Activated CD4-positive, alpha-beta T cell treated with anti-CD3 and anti-CD28 coated beads for 36 hours (primary cell): ENCODE measurements at regions of chr4 and their contacts with region 1.

Region 1: DNA sequence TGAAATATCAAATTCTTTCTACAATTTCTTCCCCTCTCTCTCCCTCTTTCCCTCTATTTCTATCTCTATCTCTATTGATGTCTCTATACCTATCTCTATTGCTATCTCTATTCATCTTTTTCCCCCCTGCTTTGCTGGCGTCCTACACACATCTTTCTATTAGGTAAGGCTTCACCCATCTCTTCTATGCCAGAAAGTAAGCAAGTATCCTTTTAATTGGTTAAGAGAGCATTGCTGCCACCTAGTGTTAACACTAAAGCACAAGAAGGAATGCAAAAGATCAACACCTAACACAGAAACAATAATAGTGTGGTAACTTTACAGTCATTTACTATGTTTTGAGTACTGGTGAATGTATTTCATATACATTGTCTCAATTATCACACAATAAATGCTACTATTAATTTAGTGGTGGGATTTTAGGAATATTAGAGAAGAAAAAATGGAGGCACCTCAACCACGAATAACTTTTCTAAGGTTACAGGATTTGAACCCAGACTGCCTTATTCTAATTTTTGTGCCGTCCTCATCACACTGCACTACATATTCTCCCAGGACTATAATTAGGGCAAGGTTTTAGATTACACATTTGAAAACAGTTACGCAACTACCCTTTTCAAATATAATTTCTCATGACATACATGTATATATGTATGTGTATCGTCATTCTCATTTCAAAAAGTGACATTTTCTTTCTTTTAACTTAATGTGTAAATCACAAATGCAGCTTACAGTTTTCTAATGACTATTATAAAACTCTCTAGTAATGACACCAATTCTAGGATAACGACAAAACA is 3.7 kb upstream of the C4orf36 start:
- DNase-seq: no peak
- ATAC-seq: peak; percentile 40
- H3K4me3 Mint-ChIP-seq: no peak overlapping the region
- H3K27ac Mint-ChIP-seq: no peak overlapping the region
- H3K4me1 Mint-ChIP-seq: peaks cover 7% of the 10 kb centered on the region
- H3K27me3 Mint-ChIP-seq: peaks cover 14% of the 10 kb centered on the region

Region 2: GRCh38 chr4:86522349-86522748 is 373.5 kb before region 1 on chr4:
- CTCF ChIA-PET with region 1: interaction called, 3 read pairs
- POLR2A ChIA-PET with region 1: no interaction called
- intact Hi-C with region 1: loop called in 1 of 2 experiments (anchors 1 kb)
- DNase-seq: no peak
- ATAC-seq: no peak
- H3K4me3 Mint-ChIP-seq: no peak overlapping the region
- H3K27ac Mint-ChIP-seq: no peak overlapping the region
- H3K4me1 Mint-ChIP-seq: no peaks in the 10 kb centered on the region
- H3K27me3 Mint-ChIP-seq: peaks cover 15% of the 10 kb centered on the region

Region 3: GRCh38 chr4:86593688-86594558 is 302.0 kb before region 1 on chr4 and contains the start of gene PTPN13:
- CTCF ChIA-PET with region 1: no interaction called
- POLR2A ChIA-PET with region 1: no interaction called
- intact Hi-C with region 1: loop called in 1 of 2 experiments (anchors 5 kb)
- DNase-seq: peak; percentile 84
- ATAC-seq: peak; percentile 91
- H3K4me3 Mint-ChIP-seq: peak within 1 kb of the TSS; percentile 70
- H3K27ac Mint-ChIP-seq: peak within 1 kb of the TSS; percentile 16
- H3K4me1 Mint-ChIP-seq: peaks cover 14% of the 10 kb centered on the region
- H3K27me3 Mint-ChIP-seq: peaks cover 33% of the 10 kb centered on the region
- total RNA-seq, gene PTPN13: 1.4 to 1.5 TPM

Region 4: DNA sequence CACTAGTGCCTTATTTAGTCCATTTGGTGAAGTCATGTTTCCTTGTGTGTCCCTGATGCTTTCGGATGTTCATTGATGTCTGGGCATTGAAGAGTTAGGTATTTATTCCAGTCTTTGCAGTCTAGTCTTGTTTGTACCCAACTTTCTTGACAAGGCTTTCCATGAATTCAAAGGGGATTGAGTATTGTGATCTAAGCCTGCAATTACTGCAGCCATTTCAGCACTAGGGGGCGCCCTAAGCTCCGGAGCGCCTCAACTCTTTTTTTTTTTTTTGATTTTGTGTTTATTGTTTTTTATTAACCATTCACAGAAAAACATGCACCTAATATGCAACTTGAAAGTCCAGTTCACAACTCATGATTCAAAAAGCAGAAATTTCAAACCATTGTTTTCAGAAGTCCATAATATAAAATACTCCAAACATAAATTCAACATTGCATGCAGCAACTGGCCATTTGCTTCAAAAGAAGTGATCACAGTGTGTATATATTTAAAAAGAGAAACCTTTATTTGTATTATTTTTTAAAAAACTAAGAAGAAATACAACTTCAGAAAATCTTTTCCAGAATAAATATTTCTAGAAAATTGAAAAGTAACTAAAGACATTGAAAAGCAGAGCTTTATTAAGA is 242.5 kb before region 1 on chr4:
- CTCF ChIA-PET with region 1: no interaction called
- POLR2A ChIA-PET with region 1: no interaction called
- intact Hi-C with region 1: loop called in 1 of 2 experiments (anchors 2 kb)
- DNase-seq: peak; percentile 55
- ATAC-seq: no peak
- H3K4me3 Mint-ChIP-seq: no peak overlapping the region
- H3K27ac Mint-ChIP-seq: no peak overlapping the region
- H3K4me1 Mint-ChIP-seq: no peaks in the 10 kb centered on the region
- H3K27me3 Mint-ChIP-seq: peaks cover 4% of the 10 kb centered on the region

Region 5: GRCh38 chr4:86670739-86671138 is 225.2 kb before region 1 on chr4:
- CTCF ChIA-PET with region 1: no interaction called
- POLR2A ChIA-PET with region 1: no interaction called
- intact Hi-C with region 1: loop called in 1 of 2 experiments (anchors 10 kb)
- DNase-seq: no peak
- ATAC-seq: peak; percentile 61
- H3K4me3 Mint-ChIP-seq: no peak overlapping the region
- H3K27ac Mint-ChIP-seq: no peak overlapping the region
- H3K4me1 Mint-ChIP-seq: peaks cover 5% of the 10 kb centered on the region
- H3K27me3 Mint-ChIP-seq: no peaks in the 10 kb centered on the region

Region 6: DNA sequence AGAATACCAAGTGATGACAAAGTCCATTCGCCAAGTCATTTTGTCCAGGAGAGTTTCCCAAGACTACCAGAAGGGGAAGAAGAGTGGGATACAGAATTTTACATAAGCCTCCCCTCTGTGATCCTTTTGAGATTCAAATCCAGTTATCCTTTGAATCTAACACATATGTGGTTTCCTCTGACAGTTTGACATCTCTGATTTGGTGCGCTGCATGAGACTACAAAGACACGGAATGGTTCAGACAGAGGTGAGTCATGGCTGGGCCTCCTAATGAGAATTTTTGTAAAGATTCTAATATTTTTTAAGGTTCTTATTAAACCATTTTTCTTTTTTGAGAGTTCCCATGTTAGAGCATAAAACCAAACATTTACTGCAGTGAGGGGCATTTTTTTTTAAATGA is 85.0 kb before region 1 on chr4:
- CTCF ChIA-PET with region 1: no interaction called
- POLR2A ChIA-PET with region 1: no interaction called
- intact Hi-C with region 1: no loop called
- DNase-seq: no peak
- ATAC-seq: no peak
- H3K4me3 Mint-ChIP-seq: no peak overlapping the region
- H3K27ac Mint-ChIP-seq: no peak overlapping the region
- H3K4me1 Mint-ChIP-seq: no peaks in the 10 kb centered on the region
- H3K27me3 Mint-ChIP-seq: no peaks in the 10 kb centered on the region

Region 7: DNA sequence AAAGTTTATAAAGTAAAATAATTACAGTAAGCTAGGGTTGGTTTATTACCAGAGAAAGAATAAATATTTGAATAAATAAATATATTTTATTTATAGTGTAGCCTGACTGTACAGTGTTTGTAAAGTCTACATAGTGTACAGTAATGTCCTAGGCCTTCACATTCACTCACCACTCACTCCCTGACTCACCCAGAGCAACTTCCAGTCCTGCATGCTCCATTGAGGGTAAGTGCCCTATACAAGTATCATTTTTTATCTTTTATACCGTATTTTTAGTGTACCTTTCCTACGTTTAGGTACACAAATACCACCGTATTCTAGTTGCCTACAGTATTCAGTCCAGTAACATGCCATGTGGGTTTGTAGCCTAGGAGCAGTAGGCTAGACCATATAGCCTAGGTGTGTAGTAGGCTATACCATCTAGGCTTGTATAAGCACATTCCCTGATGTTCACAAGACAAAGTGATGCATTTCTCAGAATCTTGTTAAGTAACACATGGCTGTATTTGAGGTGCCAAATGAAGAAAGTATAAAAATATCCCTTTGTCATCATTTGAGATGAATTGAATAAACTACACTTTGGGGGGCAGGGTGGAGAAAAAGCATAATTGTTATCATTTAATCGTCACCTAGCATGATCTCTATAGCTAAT is 339.3 kb after region 1 on chr4:
- CTCF ChIA-PET with region 1: interaction called, 3 read pairs
- POLR2A ChIA-PET with region 1: no interaction called
- intact Hi-C with region 1: loop called in 1 of 2 experiments (anchors 10 kb)
- DNase-seq: no peak
- ATAC-seq: no peak
- H3K4me3 Mint-ChIP-seq: peak overlapping the region; percentile 69
- H3K27ac Mint-ChIP-seq: no peak overlapping the region
- H3K4me1 Mint-ChIP-seq: peaks cover 1% of the 10 kb centered on the region
- H3K27me3 Mint-ChIP-seq: no peaks in the 10 kb centered on the region